ENCODE measurements at regions of chr4 and their contacts with region 1.

Region 1: DNA sequence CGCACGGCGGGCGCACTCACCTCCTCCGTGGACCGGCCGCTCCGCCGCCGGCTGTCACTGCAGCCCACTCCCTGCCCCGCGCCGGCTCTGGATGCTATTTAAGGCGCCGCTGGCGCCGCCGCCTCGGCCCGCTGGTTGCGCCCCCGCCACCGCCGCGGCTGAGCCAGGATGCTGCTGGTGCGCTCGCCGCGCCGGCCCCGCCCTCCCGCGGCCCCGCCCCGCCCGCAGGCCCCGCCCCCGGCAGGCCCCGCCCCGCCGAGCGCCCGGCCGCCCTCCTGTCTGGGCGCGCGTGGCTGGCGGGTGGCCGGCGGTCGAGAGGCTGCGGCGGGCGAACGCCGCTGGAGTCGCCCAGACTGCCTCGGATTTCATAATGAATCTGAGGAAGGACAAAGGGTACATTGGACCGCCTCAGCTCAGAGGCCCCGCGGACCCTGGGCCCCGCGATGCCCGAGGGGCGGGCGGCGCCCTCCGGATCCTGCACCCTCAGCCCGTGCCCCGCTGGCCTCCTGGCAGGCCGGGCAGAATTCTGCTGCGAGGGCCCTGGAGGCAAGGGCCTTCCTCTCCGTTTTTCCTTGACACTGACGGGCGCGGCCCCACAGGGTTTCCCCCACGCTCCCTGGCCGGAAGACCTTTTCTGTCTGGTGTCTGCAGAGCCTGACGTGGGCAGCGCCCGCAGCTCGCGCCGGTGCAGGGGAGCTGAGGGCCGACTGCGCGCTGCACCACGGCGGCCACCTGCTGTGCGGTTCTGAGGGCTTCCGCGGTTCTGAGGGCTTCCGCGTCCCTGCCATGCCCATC is at the start of gene ACSL1:
- DNase-seq: peak; percentile 85 to 92
- H3K4me3 ChIP-seq: peak within 1 kb of the TSS; percentile 56 to 72
- H3K27ac ChIP-seq: peak within 1 kb of the TSS; percentile 81
- H3K4me1 ChIP-seq: peaks cover 0 to 22% (median 10%) of the 10 kb centered on the region in 4 donors
- H3K27me3 ChIP-seq: no peaks in the 10 kb centered on the region
- CTCF ChIP-seq: peak in 1 of 2 experiments; percentile 11

Region 2: DNA sequence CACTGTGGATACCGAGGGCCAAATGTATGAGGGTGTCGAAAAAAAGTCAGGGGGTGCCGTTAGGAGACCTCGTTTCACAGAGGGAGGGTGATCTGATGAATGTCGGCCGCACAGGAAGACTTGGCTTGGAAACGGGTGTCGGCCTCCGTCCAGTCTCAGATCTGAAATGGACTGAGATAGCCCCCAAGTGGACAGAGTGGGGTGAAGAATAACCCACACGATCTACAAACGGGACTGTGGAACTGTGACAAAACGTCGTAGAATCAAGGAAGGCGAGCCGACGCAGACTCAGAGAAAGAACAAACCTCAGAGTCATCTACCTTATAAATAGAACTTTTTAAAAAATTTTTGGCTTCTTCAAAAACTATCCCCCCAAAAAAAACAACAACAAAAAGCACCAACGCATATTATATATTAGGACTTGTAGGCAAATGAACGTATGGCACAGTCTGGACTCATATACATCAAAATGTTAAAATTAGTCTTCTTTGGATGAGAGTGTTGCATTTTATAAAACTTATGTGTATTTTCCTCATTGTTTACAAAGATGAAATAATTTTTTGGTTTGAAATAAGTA is 288.0 kb before region 1 on chr4:
- intact Hi-C with region 1: loop called (anchors 10 kb)
- DNase-seq: peak; percentile 92
- H3K4me3 ChIP-seq: peak overlapping the region; percentile 60 to 66
- H3K27ac ChIP-seq: peak overlapping the region; percentile 93
- H3K4me1 ChIP-seq: peaks cover 0 to 31% (median 12%) of the 10 kb centered on the region in 4 donors
- H3K27me3 ChIP-seq: no peaks in the 10 kb centered on the region
- CTCF ChIP-seq: peak; percentile 72 to 80

Region 3: DNA sequence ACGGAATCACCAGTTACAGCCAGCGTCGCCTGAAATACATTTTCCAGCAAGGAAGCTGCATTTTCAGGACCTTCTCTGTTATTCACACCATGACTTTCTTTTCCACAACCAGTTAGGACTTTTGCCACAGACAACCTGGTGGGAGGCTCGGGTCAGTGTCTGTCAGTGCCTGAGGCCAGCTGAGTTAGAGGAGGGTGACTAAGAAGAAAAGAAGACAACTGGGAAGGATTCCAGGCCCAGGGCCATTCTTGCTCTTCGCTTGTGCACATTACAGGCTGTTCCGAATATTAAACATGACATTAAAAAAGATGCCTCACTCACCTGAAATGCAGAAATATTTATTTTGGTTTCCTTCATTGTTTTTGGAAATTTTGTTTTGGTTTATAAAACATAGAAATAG is 70.8 kb before region 1 on chr4:
- intact Hi-C with region 1: loop called (anchors 5 kb)
- DNase-seq: no peak
- H3K4me3 ChIP-seq: no peak overlapping the region
- H3K27ac ChIP-seq: no peak overlapping the region
- H3K4me1 ChIP-seq: peaks cover 0 to 14% (median 0%) of the 10 kb centered on the region in 4 donors
- H3K27me3 ChIP-seq: no peaks in the 10 kb centered on the region
- CTCF ChIP-seq: no peak

Region 4: GRCh38 chr4:185128272-185129119 is 302.4 kb after region 1 on chr4:
- intact Hi-C with region 1: loop called (anchors 10 kb)
- DNase-seq: no peak
- H3K4me3 ChIP-seq: peak overlapping the region; percentile 64 to 81
- H3K27ac ChIP-seq: peak overlapping the region; percentile 73 to 80
- H3K4me1 ChIP-seq: peaks cover 0 to 15% (median 6%) of the 10 kb centered on the region in 4 donors
- H3K27me3 ChIP-seq: no peaks in the 10 kb centered on the region
- CTCF ChIP-seq: peak; percentile 16 to 29